Ascending aorta (tissue), 2 donors: ENCODE measurements at regions of chr14 and their contacts with region 1.

Region 1: DNA sequence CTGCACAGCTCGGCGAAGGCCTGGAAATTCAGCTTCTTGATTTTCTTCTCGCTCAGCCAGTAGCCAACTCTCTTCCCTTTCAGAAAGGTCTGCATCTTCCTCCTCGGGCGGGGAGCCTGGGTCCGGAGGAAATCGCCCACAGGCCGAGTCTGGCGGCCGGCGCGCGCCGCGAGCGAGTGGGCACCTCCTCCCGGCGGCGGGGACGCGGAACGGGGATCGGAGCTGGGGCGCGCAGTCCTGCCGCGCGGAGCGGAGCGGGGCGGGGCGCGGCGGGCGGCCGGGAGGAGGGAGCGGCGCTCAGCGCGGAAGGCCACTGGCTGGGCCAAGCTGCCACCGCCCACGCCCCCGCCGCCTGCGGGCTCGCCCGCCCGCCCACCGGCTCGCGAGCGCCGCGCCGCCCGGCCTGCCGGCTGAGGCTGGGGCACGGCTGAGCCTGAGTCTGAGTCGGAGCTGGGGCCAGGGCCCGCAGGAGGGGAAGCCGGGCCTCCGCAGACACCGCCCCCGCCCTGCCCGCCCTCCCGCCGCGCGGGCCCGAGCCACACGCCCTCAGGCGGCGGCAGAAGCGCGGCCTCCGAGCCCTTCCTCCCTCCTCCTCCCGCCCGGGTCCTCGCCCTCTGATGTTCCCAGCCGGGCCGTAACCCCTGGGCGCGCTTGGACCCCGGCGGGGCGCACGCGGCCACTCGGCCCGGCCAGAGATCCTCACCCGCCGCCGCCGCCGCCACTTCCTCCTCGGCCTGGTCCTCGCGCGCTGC is 480 bp downstream of the ITPK1 start:
- DNase-seq: peak; percentile 27 to 92
- H3K4me3 ChIP-seq: peak overlapping the region; percentile 97 to 99
- H3K27ac ChIP-seq: peak overlapping the region; percentile 98 to 100
- H3K4me1 ChIP-seq: peaks cover 9 to 28% of the 10 kb centered on the region in 2 donors
- H3K27me3 ChIP-seq: no peaks in the 10 kb centered on the region
- CTCF ChIP-seq: peak in 1 of 3 experiments; percentile 16

Region 2: GRCh38 chr14:92832137-92832700 is 283.0 kb before region 1 on chr14:
- intact Hi-C with region 1: no loop called
- DNase-seq: no peak
- H3K4me3 ChIP-seq: no peak overlapping the region
- H3K27ac ChIP-seq: no peak overlapping the region
- H3K4me1 ChIP-seq: no peaks in the 10 kb centered on the region
- H3K27me3 ChIP-seq: no peaks in the 10 kb centered on the region
- CTCF ChIP-seq: no peak

Region 3: DNA sequence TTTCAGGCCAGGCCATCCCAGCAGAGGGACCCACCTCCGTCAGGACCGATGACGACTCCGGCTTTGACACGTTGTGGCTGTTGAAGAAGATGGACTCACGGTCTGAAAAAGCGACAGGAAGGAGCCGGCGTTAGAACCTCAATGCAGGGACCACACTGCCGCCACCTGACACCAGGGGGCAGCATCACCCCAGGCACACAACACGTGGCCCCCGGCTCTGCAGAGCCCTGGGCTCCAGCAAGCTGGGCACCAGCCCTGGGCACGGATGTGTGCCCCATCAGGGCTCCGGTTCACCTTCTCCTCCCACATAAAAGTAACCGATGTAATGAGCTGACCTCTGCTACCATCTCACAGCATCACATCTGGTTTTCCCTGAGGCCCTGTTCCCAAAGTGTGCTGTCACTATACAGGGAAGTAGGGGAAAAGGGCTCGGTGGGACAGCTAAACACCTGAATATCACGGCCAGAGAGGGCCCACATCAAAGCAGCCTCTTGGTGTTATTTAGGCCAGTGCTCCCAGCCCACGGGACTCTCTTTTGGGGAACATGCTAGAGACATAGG is 163.3 kb before region 1 on chr14:
- intact Hi-C with region 1: loop called (anchors 1 kb)
- DNase-seq: peak in 1 of 2 donors; percentile 86
- H3K4me3 ChIP-seq: peak overlapping the region in 1 of 2 donors; percentile 33
- H3K27ac ChIP-seq: peak overlapping the region; percentile 51 to 79
- H3K4me1 ChIP-seq: peaks cover 0 to 25% of the 10 kb centered on the region in 2 donors
- H3K27me3 ChIP-seq: no peaks in the 10 kb centered on the region
- CTCF ChIP-seq: peak; percentile 93 to 97 (median 96)

Region 4: GRCh38 chr14:93012951-93013719 is 102.1 kb before region 1 on chr14:
- intact Hi-C with region 1: loop called (anchors 5 kb)
- DNase-seq: peak in 1 of 2 donors; percentile 73
- H3K4me3 ChIP-seq: no peak overlapping the region
- H3K27ac ChIP-seq: peak overlapping the region; percentile 6 to 37
- H3K4me1 ChIP-seq: peaks cover 8 to 22% of the 10 kb centered on the region in 2 donors
- H3K27me3 ChIP-seq: no peaks in the 10 kb centered on the region
- CTCF ChIP-seq: no peak

Region 5: DNA sequence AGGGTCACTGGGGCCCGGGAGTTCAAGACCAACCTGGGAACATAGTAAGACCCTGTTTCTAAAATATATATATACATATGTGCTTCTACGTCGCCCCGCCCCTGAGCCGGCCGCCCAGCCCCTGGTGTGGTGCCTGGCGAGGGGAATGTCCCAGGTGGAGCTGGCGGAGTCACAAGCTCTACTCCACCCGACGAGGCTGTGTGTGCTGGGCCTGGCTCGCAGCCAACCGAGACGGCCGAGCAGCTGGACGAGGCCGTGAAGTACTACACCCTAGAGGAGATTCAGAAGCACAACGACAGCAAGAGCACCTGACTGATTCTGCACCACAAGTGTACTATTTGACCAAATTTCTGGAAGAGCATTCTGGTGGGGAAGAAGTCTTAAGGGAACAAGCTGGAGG is 22.6 kb after region 1 on chr14:
- intact Hi-C with region 1: loop called (anchors 1 kb)
- DNase-seq: no peak
- H3K4me3 ChIP-seq: no peak overlapping the region
- H3K27ac ChIP-seq: no peak overlapping the region
- H3K4me1 ChIP-seq: no peaks in the 10 kb centered on the region
- H3K27me3 ChIP-seq: no peaks in the 10 kb centered on the region
- CTCF ChIP-seq: no peak

Region 6: GRCh38 chr14:93150227-93151206 is 35.3 kb after region 1 on chr14:
- intact Hi-C with region 1: no loop called
- DNase-seq: no peak
- H3K4me3 ChIP-seq: no peak overlapping the region
- H3K27ac ChIP-seq: no peak overlapping the region
- H3K4me1 ChIP-seq: no peaks in the 10 kb centered on the region
- H3K27me3 ChIP-seq: no peaks in the 10 kb centered on the region
- CTCF ChIP-seq: no peak

Region 7: GRCh38 chr14:93206793-93207467 is 91.7 kb after region 1 on chr14 and contains the starts of genes GON7 and UBR7:
- intact Hi-C with region 1: loop called (anchors 5 kb)
- DNase-seq: peak; percentile 78 to 97
- H3K4me3 ChIP-seq: peak within 1 kb of the TSS; percentile 65 to 72
- H3K27ac ChIP-seq: peak within 1 kb of the TSS; percentile 85 to 86
- H3K4me1 ChIP-seq: peaks cover 8 to 11% of the 10 kb centered on the region in 2 donors
- H3K27me3 ChIP-seq: no peaks in the 10 kb centered on the region
- CTCF ChIP-seq: peak in 2 of 3 experiments; percentile 5 to 31
- total RNA-seq, gene GON7: 4.6 TPM
- total RNA-seq, gene UBR7: 8.3 TPM